Right ventricle myocardium superior (tissue), 1 donor: ENCODE measurements at regions of chr12 and their contacts with region 1.

Region 1: DNA sequence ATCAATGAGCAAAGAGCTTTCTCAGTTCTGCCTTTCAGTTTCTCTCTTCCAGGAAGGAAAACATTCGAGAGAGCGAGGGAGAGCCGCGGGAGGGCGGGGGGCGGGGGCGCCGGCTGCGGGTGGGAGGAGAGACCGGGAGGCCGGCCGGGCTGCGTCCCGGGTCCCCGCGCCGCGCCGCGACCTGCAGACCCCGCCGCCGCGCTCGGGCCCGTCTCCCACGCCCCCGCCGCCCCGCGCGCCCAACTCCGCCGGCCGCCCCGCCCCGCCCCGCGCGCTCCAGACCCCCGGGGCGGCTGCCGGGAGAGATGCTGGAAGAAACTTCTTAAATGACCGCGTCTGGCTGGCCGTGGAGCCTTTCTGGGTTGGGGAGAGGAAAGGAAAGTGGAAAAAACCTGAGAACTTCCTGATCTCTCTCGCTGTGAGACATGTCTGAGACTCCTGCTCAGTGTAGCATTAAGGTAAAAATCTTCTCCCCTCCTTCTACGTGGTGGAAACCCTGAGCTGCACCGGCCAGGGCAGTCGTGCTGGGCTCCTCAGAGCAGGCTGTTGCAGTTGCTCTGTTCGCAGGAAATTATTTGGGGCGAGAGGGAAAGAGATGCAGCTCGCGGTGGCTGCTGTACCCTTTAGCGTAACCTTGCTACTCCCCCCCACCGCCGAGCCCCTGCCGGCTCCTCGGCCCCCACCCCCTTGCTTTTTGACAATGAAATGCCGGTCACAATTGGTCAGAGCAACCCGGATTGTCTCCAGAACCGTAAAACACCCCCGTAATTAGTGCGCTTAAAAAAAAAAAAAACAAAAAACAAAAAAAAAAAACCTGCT is 438 bp downstream of the ETV6 start:
- DNase-seq: peak; percentile 59
- ATAC-seq: peak; percentile 17

Region 2: DNA sequence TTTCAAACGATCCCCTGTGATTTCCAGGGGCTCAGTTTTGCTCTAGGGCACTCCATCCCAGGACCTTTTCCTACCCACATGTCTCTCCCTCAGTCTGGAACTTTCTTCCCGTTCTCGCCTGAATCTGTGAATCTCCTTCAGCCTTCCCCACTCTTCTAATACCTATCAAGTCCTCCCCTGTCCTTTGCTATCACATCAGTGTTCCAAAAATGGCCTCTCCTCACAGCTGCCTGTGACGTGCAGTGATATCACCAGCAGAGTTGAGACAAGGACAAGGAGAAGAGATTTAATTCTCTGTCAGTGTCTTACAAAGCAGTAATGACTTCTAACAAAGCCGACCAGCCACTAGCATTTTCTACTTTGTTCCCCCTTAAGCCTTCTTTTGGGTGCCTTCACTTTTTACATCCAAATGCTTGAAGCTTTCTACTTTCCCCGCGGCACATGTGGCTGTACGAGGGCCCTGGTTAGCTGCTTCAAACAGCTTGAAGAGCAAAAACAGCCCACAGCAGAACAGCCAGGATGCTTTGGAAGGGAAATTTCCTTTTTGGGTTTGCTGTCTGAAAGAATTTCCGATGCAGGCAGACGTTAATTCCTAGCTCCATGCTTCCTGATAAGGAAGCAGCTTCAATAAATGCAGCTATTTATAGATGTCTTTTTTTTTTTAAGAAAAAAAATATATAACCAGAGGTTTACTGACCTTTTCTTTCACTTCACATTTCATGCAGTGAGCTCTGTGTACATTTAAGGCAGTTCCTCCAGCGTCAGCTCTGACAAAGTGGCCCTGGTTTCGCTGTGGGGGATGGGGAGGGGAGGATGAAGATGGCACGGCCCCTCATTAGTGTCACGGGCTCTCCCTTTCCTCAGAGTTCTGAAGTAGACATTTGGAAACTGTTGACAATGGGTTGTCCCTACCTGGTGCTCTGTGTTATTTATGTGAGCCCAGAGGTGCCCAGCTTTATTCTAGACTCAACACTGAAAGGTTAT is 108.9 kb after region 1 on chr12:
- intact Hi-C with region 1: loop called (anchors 10 kb)
- DNase-seq: no peak
- ATAC-seq: peak; percentile 80

Region 3: GRCh38 chr12:11885261-11886038 is 235.5 kb after region 1 on chr12:
- intact Hi-C with region 1: loop called (anchors 10 kb)
- DNase-seq: no peak
- ATAC-seq: peak; percentile 24

Region 4: GRCh38 chr12:12376646-12377448 is 726.9 kb after region 1 on chr12:
- intact Hi-C with region 1: no loop called
- DNase-seq: no peak
- ATAC-seq: peak; percentile 82